Left ventricle myocardium inferior (tissue), 1 donor: ENCODE measurements at regions of chr19 and their contacts with region 1.

Region 1: DNA sequence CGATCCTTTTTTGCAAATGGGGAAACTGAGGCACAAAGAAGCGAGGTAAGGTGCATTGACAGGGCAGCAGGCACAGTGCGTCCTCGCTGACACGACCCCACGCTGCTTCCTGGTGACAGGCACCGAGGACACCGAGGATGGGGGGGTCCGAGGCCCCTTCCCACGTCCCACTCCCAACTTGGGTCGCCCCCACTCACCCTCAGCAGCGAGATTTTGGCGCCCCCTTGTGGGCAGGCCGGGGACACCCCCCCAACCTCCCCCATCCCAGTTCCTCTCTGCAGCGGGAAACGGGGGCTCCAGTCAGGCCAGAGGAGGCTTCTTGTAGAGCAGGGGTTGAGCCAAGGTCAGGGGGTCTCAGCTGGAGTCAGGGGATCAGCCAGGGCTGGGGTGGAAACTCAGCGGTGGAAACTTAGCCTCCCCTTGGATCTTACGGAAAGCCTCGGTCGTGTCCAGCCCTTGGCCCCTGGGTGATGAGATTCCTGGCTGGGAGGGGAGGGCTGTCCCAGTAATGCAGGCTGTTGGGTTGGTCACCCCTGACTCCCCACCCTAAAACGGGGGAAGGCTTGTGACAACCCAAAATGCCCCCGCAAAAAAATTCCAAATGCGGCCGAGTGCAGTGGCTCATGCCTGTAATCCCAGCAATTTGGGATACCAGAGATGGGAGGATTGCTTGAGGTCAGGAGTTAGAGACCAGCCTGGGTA is 8.2 kb downstream of the SMIM24 start:
- DNase-seq: peak; percentile 44
- H3K4me3 ChIP-seq: no peak overlapping the region
- H3K27ac ChIP-seq: no peak overlapping the region
- H3K4me1 ChIP-seq: peaks cover 39% of the 10 kb centered on the region
- H3K27me3 ChIP-seq: peaks cover 29% of the 10 kb centered on the region
- CTCF ChIP-seq: peak; percentile 91

Region 2: DNA sequence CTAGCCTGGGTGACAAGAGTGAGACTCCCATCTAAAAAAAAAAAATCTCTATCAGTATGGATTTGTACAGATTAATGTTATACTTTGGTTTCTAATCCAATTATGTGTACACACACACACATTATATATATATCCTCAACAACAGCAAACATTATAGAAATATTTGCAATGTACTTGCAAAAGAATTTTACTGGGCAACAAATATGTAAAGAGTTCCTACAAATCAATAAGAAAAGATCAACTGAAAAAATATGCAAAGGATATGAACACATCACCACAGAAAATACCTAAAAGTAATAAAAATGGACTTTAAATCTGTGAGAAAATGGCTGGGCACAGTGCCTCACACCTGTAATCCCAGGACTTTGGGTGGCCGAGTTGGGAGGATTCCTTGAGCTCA is 146.7 kb before region 1 on chr19:
- intact Hi-C with region 1: loop called (anchors 5 kb)
- DNase-seq: no peak
- H3K4me3 ChIP-seq: no peak overlapping the region
- H3K27ac ChIP-seq: no peak overlapping the region
- H3K4me1 ChIP-seq: no peaks in the 10 kb centered on the region
- H3K27me3 ChIP-seq: peaks cover 15% of the 10 kb centered on the region
- CTCF ChIP-seq: no peak